ENCODE measurements at regions of chr1 and their contacts with region 1.

Region 1: DNA sequence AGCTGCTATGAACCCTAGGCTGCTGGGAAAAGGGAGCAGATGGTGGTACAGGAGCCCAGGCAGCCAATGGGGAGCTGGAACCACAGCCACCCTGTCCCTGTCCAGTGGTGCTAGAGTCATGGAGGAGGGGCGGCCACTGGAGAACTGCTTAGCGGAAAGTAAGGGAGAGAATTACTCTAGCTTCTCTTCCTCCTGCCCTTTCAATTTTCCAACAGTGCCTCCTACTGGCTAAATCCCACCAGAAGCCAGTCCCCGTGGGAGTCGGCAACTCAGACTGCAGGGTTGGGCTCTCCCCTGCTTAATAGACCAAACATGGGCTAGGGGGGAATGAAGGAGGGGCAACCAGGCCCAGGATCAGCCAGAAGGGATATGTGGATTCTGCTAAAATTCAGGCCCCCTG is 154.5 kb downstream of the ACTL8 start:
- DNase-seq: peak; percentile 42
- H3K4me3 Mint-ChIP-seq: no peak overlapping the region
- H3K27ac Mint-ChIP-seq: no peak overlapping the region
- H3K4me1 Mint-ChIP-seq: no peaks in the 10 kb centered on the region
- H3K27me3 Mint-ChIP-seq: peaks cover 51% of the 10 kb centered on the region
- CTCF ChIP-seq: peak; percentile 40

Region 2: GRCh38 chr1:17719874-17720273 is 189.8 kb before region 1 on chr1:
- CTCF ChIA-PET with region 1: no interaction called
- POLR2A ChIA-PET with region 1: no interaction called
- intact Hi-C with region 1: no loop called
- DNase-seq: no peak
- H3K4me3 Mint-ChIP-seq: no peak overlapping the region
- H3K27ac Mint-ChIP-seq: no peak overlapping the region
- H3K4me1 Mint-ChIP-seq: no peaks in the 10 kb centered on the region
- H3K27me3 Mint-ChIP-seq: peaks cover 11% of the 10 kb centered on the region
- CTCF ChIP-seq: no peak

Region 3: DNA sequence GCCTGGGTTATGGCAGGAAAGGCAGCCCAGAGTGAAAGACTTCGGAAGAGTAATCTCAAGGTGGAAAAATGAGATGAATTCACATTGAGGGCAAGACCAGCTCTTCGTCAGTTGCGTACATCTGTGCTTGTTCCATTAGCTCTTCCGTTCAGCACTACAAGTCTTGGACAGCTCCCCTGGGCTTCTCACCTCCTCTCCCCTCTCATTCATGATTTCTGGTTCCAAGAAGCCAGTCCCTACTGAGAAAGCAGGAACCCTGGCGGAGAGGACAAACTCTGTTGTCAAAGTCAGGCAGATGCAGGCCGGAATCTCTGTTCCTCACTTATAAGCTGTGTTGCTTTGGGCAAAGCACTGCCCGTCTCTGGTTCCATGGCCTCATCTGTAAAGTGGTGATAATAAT is 78.0 kb before region 1 on chr1:
- CTCF ChIA-PET with region 1: no interaction called
- POLR2A ChIA-PET with region 1: no interaction called
- intact Hi-C with region 1: loop called (anchors 10 kb)
- DNase-seq: peak; percentile 64
- H3K4me3 Mint-ChIP-seq: no peak overlapping the region
- H3K27ac Mint-ChIP-seq: no peak overlapping the region
- H3K4me1 Mint-ChIP-seq: no peaks in the 10 kb centered on the region
- H3K27me3 Mint-ChIP-seq: peaks cover 58% of the 10 kb centered on the region
- CTCF ChIP-seq: no peak

Region 4: GRCh38 chr1:17966341-17966740 is 56.7 kb after region 1 on chr1:
- CTCF ChIA-PET with region 1: no interaction called
- POLR2A ChIA-PET with region 1: no interaction called
- intact Hi-C with region 1: no loop called
- DNase-seq: no peak
- H3K4me3 Mint-ChIP-seq: no peak overlapping the region
- H3K27ac Mint-ChIP-seq: no peak overlapping the region
- H3K4me1 Mint-ChIP-seq: no peaks in the 10 kb centered on the region
- H3K27me3 Mint-ChIP-seq: peaks cover 57% of the 10 kb centered on the region
- CTCF ChIP-seq: no peak